Common myeloid progenitor, CD34-positive (primary cell): ENCODE measurements at regions of chr10 and their contacts with region 1.

Region 1: DNA sequence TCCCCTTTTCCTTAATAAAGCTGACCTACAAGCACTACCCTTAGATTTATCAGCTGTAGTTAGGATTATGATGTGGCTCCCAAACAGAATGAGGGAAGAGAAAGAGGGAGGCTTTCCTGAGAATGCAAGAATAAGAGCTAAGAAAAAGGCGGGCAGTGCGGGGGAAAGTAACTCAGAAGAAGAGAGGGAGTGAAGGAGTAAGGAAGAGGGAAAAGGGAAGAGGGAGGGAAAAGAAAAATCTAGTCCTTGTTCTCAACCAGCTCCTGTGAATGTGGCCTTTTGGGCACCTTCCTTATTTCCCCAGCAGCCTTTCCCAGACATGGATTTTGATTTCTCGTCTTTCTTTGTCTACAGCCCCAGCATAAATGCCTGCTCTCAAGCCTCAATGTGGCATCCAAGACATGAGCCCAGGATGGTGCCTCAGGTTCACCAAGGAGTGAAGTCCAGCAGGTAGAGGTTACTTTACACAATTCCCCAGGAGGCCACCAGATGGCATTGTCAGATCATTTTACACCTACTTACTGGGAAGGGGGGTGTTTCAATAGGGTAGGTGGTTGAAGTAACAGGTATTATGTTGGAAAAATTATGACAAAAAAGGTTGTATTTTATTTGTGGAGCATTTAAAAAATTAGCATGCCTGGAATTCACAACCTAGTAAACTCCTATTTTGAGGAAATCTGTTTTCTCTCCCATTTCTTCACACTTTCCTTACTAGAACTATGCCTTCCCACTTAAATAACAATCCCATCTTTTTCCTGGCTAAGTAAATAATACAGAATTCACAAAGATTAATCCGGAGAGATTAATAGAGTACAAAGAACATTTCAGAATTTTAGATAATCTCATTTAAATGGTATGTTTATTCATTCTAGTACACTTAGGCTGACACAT is 106.5 kb downstream of the HTR7 start:
- DNase-seq: peak; percentile 49 to 71 (median 64)
- H3K4me3 ChIP-seq: no peak overlapping the region
- H3K27ac ChIP-seq: no peak overlapping the region
- H3K4me1 ChIP-seq: peaks cover 0 to 8% (median 6%) of the 10 kb centered on the region in 4 experiments
- H3K27me3 ChIP-seq: peaks cover 0 to 8% (median 0%) of the 10 kb centered on the region in 5 experiments

Region 2: GRCh38 chr10:90718182-90718581 is 33.2 kb before region 1 on chr10:
- CTCF ChIA-PET with region 1: no interaction called
- POLR2A ChIA-PET with region 1: no interaction called
- DNase-seq: no peak
- H3K4me3 ChIP-seq: no peak overlapping the region
- H3K27ac ChIP-seq: no peak overlapping the region
- H3K4me1 ChIP-seq: no peaks in the 10 kb centered on the region
- H3K27me3 ChIP-seq: peaks cover 0 to 2% (median 0%) of the 10 kb centered on the region in 5 experiments

Region 3: DNA sequence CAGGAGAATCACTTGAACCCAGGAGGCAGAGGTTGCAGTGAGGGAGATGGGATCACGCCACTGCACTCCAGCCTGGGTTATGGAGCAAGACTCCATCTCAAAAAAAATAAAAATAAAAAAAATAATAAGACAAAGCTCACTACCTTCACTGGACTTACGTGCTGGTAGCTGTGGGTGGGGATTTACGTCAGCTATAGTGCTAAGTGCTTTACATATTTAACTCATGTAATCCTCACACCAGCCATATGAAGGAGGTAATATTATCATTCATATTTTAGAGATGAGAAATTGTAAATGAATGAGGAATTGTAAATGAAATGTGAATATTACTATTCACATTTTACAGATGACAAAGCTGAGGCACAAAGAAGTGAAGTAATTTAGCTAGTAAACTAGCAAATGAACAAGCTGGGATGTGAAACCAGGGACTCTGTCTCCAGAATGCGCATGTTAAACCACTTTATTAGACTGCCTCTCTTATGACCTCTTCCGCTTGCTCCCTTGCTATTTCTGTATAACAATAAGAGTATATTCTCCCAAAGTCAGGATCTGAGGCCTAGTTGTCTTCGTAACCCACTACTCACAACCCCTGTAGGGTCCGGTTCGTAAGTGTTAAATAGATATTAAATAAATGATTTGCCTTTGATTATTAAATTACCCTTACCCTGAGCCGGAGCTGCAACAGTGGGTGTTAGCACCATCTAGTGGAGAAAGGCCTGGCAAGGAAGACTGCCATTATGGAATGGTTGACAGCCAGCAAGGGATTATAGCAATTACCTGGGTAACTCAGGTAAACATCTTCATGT is 36.2 kb after region 1 on chr10:
- CTCF ChIA-PET with region 1: interaction called, 17 read pairs
- POLR2A ChIA-PET with region 1: no interaction called
- DNase-seq: peak in 2 of 3 donors; percentile 28 to 37
- H3K4me3 ChIP-seq: no peak overlapping the region
- H3K27ac ChIP-seq: no peak overlapping the region
- H3K4me1 ChIP-seq: peaks cover 6 to 12% (median 8%) of the 10 kb centered on the region in 4 experiments
- H3K27me3 ChIP-seq: no peaks in the 10 kb centered on the region

Region 4: GRCh38 chr10:90857635-90858460 is 106.5 kb after region 1 on chr10 and contains the start of gene HTR7:
- CTCF ChIA-PET with region 1: interaction called, 168 read pairs
- POLR2A ChIA-PET with region 1: no interaction called
- DNase-seq: peak; percentile 43 to 76 (median 72)
- H3K4me3 ChIP-seq: peak within 1 kb of the TSS; percentile 53 to 86 (median 77)
- H3K27ac ChIP-seq: no peak within 1 kb of the TSS
- H3K4me1 ChIP-seq: peaks cover 0 to 14% (median 12%) of the 10 kb centered on the region in 4 experiments
- H3K27me3 ChIP-seq: peaks cover 16 to 40% (median 34%) of the 10 kb centered on the region in 5 experiments